Posterior cingulate gyrus (tissue), 11 donors: ENCODE measurements at regions of chr1 and their contacts with region 1.

Region 1: DNA sequence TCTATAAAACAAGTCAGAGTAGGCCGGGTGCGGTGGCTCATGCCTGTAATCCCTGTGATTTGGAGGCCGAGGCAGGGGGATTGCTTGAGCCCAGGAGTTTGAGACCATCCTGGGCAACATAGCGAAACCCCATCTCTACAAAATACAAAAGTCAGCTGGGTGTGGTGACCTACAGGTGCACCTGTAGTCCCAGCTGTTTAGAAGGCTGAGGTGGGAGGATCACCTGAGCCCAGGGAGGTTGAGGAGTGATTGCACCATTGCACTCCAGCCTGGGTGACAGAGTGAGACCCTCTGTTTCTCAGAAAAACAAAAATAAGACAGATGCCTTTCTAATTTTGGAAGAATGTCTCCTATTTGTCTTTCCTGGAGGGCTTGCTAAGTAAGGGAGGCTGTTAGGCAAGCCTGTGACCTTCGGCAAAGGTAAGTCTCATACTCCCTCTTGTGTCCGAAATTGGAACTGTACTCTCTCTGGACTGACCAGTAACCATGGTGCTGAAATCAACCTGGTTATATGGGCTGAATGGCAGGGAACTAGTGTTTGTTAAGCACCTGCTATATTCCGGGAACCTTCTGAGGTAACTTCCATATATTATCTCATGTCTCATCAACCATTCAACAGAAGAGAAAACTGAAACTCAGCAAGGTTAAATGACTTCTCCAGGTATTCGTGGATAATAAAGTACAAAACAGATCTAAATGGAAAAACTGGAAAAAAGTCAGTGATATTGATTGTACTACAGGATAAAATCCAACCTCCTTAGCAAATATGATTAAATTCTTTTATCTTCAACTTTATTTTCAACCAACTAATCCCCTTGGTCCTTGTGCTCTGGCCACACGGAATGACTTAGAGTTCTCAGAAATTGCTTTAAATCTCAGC is 11.8 kb upstream of the RAB3B start:
- DNase-seq: peak in 3 of 10 donors; percentile 21 to 40 (median 37)

Region 2: DNA sequence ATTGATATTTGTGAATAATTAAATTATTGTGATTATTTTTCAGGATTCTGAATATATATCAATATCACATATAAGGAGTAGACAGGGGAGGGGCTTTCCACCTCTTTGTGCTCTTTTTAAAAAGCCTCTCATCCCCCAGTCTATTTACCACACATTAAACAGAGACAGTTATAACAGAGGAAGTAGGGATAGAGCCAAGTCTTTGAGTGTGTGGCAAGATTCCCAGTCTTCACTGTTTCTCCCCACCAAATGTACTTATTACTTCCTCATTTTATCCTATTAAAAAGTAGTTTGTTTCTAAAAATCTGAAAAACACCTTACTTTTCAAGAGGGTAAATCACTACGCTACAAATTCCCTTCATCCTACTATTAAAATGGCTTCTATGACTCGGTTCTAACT is 529.9 kb before region 1 on chr1:
- intact Hi-C with region 1: no loop called
- DNase-seq: no peak

Region 3: DNA sequence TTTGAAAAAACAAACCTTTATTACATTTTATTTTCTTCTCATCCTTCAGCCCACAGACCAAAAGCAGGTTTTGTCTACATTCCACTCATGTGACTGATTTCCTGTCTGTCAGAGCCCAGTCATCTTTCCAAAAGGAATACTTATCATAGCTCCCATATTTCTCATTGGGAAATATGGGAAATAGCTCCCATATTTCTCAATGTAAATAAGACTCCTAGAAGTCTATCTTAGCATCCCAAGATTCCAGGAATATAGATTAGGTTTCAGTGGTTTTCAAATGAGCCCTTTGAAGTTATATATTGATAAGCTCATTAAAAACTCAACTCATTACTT is 104.6 kb before region 1 on chr1:
- intact Hi-C with region 1: loop called (anchors 1 kb)
- DNase-seq: no peak

Region 4: DNA sequence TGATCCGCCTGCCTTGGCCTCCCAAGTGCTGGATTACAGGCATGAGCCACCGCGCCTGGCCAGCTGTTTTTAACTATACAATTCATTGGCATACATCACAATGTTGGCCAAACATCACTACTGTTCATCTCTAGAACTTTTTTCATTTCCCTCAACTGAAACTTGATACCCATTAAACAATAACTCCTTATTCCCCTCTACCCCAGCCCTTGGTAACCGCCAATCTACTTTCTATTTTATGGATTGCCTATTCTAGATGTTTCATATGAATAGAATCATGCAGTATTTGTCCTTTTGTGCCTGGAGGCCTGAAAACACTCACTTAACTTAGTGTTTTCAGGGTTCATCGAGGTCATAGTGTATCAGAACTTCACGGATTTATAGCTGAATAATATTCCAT is 70.0 kb after region 1 on chr1:
- intact Hi-C with region 1: no loop called
- DNase-seq: no peak